ENCODE measurements at regions of chr18 and their contacts with region 1.

Region 1: DNA sequence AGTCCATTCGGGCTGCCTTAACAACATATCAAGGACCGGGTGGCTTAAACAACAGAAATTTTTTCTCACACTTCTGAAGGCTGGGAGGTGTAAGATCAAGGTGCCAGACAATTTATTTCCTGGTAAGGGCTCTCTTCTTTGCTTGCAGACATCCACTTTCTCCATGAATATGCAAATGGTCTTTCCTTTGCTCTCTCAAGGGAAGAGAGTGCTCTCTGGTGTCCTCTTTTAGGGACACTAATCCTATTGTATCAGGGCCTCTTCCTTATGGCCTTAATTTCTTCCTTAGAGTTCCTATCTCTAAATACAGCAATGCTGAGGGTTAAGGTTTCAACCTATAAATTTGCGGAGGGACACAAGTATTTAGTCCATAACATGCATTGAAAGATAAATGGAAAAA is 770.8 kb downstream of the DSC3 start:
- DNase-seq: no peak
- ATAC-seq: no peak
- H3K4me3 Mint-ChIP-seq: no peak overlapping the region
- H3K27ac Mint-ChIP-seq: no peak overlapping the region
- H3K4me1 Mint-ChIP-seq: no peaks in the 10 kb centered on the region
- H3K27me3 Mint-ChIP-seq: no peaks in the 10 kb centered on the region
- CTCF ChIP-seq: no peak

Region 2: GRCh38 chr18:30066288-30066687 is 205.4 kb before region 1 on chr18:
- CTCF ChIA-PET with region 1: no interaction called
- POLR2A ChIA-PET with region 1: no interaction called
- intact Hi-C with region 1: no loop called
- DNase-seq: no peak
- ATAC-seq: no peak
- H3K4me3 Mint-ChIP-seq: no peak overlapping the region
- H3K27ac Mint-ChIP-seq: no peak overlapping the region
- H3K4me1 Mint-ChIP-seq: no peaks in the 10 kb centered on the region
- H3K27me3 Mint-ChIP-seq: no peaks in the 10 kb centered on the region
- CTCF ChIP-seq: no peak

Region 3: GRCh38 chr18:30288662-30289414 is 17.1 kb after region 1 on chr18:
- CTCF ChIA-PET with region 1: no interaction called
- POLR2A ChIA-PET with region 1: no interaction called
- intact Hi-C with region 1: no loop called
- DNase-seq: no peak
- ATAC-seq: no peak
- H3K4me3 Mint-ChIP-seq: no peak overlapping the region
- H3K27ac Mint-ChIP-seq: no peak overlapping the region
- H3K4me1 Mint-ChIP-seq: no peaks in the 10 kb centered on the region
- H3K27me3 Mint-ChIP-seq: no peaks in the 10 kb centered on the region
- CTCF ChIP-seq: no peak

Region 4: DNA sequence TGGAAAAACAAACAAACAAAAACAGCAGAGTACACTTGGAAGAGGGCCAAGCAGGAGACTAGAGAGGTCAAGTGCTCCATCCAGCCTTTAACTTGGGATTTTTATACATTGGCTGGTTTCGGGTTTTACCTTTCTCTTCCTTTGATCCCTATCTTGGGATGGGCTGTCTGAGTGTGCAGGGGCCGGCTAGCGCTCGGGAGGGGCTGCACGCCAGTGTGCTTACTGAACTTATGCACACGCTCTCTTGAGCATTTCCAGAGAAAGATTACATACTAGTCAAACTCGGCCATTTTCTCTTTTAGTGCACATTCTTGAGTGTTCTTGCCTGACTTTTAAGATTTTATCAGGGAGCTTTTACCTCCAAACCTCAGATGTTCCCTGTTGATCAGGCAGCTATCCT is 63.1 kb after region 1 on chr18:
- CTCF ChIA-PET with region 1: no interaction called
- POLR2A ChIA-PET with region 1: no interaction called
- intact Hi-C with region 1: loop called (anchors 10 kb)
- DNase-seq: no peak
- ATAC-seq: no peak
- H3K4me3 Mint-ChIP-seq: no peak overlapping the region
- H3K27ac Mint-ChIP-seq: no peak overlapping the region
- H3K4me1 Mint-ChIP-seq: no peaks in the 10 kb centered on the region
- H3K27me3 Mint-ChIP-seq: no peaks in the 10 kb centered on the region
- CTCF ChIP-seq: no peak

Region 5: DNA sequence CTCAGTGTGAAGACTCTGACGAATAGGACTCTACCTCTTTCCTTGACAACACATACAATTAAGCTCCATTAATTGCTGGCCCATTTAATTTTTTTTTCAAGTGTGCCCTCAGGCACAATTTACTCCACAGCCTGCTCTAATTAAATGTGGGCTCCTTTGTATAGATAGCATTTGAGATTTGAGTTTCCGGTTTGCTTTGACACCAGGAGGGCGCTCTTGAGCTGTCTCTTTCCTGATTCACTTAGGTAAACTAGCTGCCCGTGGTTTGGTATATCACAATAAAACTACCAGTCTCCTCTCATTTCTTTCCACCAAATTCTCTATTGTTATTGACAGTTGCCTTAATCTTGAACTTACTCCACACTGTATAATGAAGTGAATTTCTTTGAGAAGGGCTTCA is 104.8 kb after region 1 on chr18:
- CTCF ChIA-PET with region 1: no interaction called
- POLR2A ChIA-PET with region 1: no interaction called
- intact Hi-C with region 1: no loop called
- DNase-seq: no peak
- ATAC-seq: no peak
- H3K4me3 Mint-ChIP-seq: no peak overlapping the region
- H3K27ac Mint-ChIP-seq: no peak overlapping the region
- H3K4me1 Mint-ChIP-seq: no peaks in the 10 kb centered on the region
- H3K27me3 Mint-ChIP-seq: no peaks in the 10 kb centered on the region
- CTCF ChIP-seq: no peak

Measured in activated CD8-positive, alpha-beta T cell treated with anti-CD3 and anti-CD28 coated beads for 36 hours (primary cell).